ENCODE measurements at regions of chr22 and their contacts with region 1.

Region 1: DNA sequence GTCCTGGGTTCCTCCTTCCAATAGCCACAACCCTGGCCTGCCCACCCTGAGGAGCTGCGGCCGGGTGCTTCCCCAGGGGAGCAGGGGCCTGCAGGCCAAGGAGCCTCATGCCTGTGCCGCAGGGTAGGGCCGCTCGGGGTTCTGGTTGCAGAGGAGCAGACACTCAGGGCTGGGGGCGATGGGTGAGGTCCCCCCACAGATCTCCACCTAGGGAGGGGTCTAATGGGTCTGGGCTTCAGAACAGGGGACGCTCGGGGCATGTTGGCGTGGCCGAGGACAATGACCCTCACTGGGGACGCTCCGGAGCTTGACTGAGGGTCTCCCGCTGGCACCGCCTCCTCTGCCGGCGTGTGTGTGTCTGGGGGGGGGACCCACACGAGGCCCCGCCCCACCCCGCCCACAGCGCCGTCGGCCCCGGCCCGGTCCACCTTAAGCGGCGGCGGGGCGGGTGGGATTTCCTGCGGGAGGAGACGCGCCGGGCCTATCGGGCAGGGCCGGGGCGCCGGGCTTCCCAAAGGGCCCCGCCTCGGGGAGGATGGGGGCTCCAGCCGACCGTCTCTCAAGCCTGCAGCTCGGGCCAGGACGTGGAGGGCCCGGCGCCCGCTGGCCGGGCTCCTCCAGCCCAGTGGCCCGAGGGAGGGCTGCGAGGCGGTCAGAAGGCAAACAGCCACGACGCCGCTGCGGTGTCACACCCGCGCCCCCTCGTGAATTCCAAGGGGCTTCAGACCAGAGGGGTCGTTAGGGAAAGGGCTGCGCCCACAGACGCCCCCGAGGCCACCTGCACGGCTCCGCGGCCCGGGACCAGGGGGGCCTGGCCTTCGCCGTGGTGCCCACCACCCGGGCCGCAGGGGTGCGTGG is 636 bp upstream of the ZDHHC8 start:
- DNase-seq: peak; percentile 75
- H3K4me3 Mint-ChIP-seq: peak overlapping the region; percentile 45
- H3K27ac Mint-ChIP-seq: no peak overlapping the region
- H3K4me1 Mint-ChIP-seq: peaks cover 32% of the 10 kb centered on the region
- H3K27me3 Mint-ChIP-seq: no peaks in the 10 kb centered on the region

Region 2: GRCh38 chr22:19962233-19962908 is 168.6 kb before region 1 on chr22:
- CTCF ChIA-PET with region 1: interaction called, 3 read pairs
- POLR2A ChIA-PET with region 1: no interaction called
- intact Hi-C with region 1: loop called (anchors 1 kb)
- DNase-seq: peak; percentile 78
- H3K4me3 Mint-ChIP-seq: no peak overlapping the region
- H3K27ac Mint-ChIP-seq: no peak overlapping the region
- H3K4me1 Mint-ChIP-seq: peaks cover 10% of the 10 kb centered on the region
- H3K27me3 Mint-ChIP-seq: no peaks in the 10 kb centered on the region